ENCODE measurements at regions of chr17 and their contacts with region 1.

Region 1: DNA sequence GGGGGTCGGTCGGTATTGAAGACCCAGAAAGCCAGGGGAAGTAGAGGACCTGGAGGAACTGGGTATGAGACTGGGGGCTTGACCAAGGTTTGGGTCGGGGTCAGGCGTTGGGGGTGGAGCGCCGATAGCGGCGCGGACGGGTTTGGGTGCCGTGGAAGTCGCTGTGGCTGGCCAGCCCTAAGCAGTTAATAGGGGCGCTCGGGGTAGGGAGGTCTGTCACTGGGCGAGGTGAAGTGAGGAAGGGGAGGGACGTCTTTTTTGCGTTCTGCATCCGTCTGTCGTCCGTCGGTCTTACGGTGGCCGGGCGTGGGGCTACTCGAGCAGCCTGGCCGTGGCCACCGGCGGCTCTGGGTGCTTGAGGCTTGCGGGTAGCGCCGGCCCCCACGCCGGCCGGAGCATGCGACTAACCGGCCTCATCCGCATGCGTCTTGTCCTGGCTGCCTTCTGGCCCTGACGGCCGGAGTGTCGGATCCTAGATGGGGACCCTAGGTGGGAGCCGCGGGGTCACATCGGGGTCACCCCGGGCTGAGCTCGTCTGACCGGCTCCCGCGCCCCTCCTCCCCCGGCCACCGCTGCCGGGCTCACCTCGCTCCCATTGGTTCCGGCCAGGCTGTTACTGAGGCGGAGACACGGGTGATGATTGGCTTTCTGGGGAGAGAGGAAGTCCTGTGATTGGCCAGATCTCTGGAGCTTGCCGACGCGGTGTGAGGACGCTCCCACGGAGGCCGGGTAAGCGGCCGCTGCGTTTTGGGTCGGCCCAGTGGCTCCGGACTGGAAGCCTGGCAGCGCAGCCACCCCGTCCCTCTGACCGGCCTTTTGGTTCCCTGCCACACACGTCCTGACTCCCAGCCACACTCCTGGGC is 10.3 kb upstream of the TMEM88 start:
- DNase-seq: peak; percentile 89 to 92
- ATAC-seq: peak; percentile 33 to 60 (median 41)
- H3K4me3 ChIP-seq: peak overlapping the region; percentile 96
- H3K4me3 Mint-ChIP-seq: peak overlapping the region; percentile 100
- H3K27ac ChIP-seq: peak overlapping the region; percentile 100
- H3K27ac Mint-ChIP-seq: peak overlapping the region; percentile 100
- H3K4me1 ChIP-seq: peaks cover 46% of the 10 kb centered on the region
- H3K4me1 Mint-ChIP-seq: peaks cover 39 to 70% of the 10 kb centered on the region in 2 donors
- H3K27me3 ChIP-seq: no peaks in the 10 kb centered on the region
- H3K27me3 Mint-ChIP-seq: peaks cover 0 to 2% of the 10 kb centered on the region in 2 donors
- CTCF ChIP-seq: no peak

Region 2: GRCh38 chr17:7484067-7484918 is 360.2 kb before region 1 on chr17 and contains the start of gene POLR2A:
- intact Hi-C with region 1: loop called (anchors 5 kb)
- DNase-seq: peak; percentile 99
- ATAC-seq: peak; percentile 63 to 83 (median 66)
- H3K4me3 ChIP-seq: peak within 1 kb of the TSS; percentile 81
- H3K4me3 Mint-ChIP-seq: peak within 1 kb of the TSS; percentile 100
- H3K27ac ChIP-seq: peak within 1 kb of the TSS; percentile 96
- H3K27ac Mint-ChIP-seq: peak within 1 kb of the TSS; percentile 100
- H3K4me1 ChIP-seq: peaks cover 50% of the 10 kb centered on the region
- H3K4me1 Mint-ChIP-seq: peaks cover 72 to 84% of the 10 kb centered on the region in 2 donors
- H3K27me3 ChIP-seq: no peaks in the 10 kb centered on the region
- H3K27me3 Mint-ChIP-seq: no peaks in the 10 kb centered on the region
- CTCF ChIP-seq: no peak
- total RNA-seq, gene POLR2A: 515 to 879 (median 524) TPM

Region 3: GRCh38 chr17:7856883-7857723 is 12.6 kb after region 1 on chr17 and contains the start of gene NAA38:
- intact Hi-C with region 1: loop called (anchors 1 kb)
- DNase-seq: peak; percentile 89 to 99
- ATAC-seq: peak; percentile 75 to 92 (median 82)
- H3K4me3 ChIP-seq: peak within 1 kb of the TSS; percentile 86
- H3K4me3 Mint-ChIP-seq: no peak within 1 kb of the TSS
- H3K27ac ChIP-seq: peak within 1 kb of the TSS; percentile 92
- H3K27ac Mint-ChIP-seq: no peak within 1 kb of the TSS
- H3K4me1 ChIP-seq: peaks cover 33% of the 10 kb centered on the region
- H3K4me1 Mint-ChIP-seq: peaks cover 5 to 9% of the 10 kb centered on the region in 2 donors
- H3K27me3 ChIP-seq: no peaks in the 10 kb centered on the region
- H3K27me3 Mint-ChIP-seq: no peaks in the 10 kb centered on the region
- CTCF ChIP-seq: no peak
- total RNA-seq, gene NAA38: 35.9 to 40.3 (median 37.3) TPM

Region 4: GRCh38 chr17:7893187-7893880 is 48.8 kb after region 1 on chr17:
- intact Hi-C with region 1: no loop called
- DNase-seq: no peak
- ATAC-seq: no peak
- H3K4me3 ChIP-seq: no peak overlapping the region
- H3K4me3 Mint-ChIP-seq: no peak overlapping the region
- H3K27ac ChIP-seq: no peak overlapping the region
- H3K27ac Mint-ChIP-seq: no peak overlapping the region
- H3K4me1 ChIP-seq: peaks cover 12% of the 10 kb centered on the region
- H3K4me1 Mint-ChIP-seq: peaks cover 0 to 19% of the 10 kb centered on the region in 2 donors
- H3K27me3 ChIP-seq: no peaks in the 10 kb centered on the region
- H3K27me3 Mint-ChIP-seq: no peaks in the 10 kb centered on the region
- CTCF ChIP-seq: no peak

Region 5: DNA sequence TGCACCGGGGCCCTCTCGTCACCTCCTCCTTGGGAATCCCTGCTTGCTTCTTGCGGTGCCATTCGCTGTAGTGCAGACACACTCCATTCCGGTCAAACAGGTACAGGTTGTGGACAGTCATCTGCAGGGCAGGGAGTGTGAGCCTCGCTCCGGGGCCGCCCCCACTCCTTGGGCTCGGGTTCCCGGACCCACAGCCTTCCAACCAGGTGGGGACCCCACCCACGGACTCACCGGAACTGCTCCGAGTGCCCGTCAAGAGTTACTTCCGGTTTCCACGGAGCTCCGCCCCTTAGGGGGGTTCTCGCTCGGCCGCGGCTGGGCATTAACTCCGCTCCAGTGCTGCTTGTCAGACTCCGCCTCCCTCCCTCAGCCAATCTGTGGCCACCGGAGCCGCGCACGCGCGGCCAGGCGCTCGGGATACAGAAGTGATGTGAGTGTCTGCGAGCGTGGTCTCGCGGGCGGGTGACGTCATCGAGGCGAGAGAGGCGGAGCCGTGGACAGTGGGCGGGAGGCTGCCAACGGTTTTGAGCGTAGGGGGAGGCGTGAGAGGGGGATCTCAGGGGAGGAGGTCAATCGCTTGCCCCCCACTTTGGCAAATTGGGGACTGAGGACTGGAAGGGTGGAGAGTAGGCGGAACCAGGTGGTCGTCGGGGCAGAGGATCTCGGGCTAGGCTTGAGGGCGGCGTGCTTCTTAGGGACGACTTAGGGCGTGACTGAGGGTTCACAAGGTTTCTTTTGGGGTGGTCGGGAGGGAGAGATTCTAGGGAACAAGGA is 87.4 kb after region 1 on chr17 and contains the starts of genes CNTROB and TRAPPC1:
- intact Hi-C with region 1: loop called (anchors 5 kb)
- DNase-seq: peak; percentile 99 to 100
- ATAC-seq: peak; percentile 93 to 99 (median 96)
- H3K4me3 ChIP-seq: peak within 1 kb of the TSS; percentile 74
- H3K4me3 Mint-ChIP-seq: peak within 1 kb of the TSS; percentile 99
- H3K27ac ChIP-seq: peak within 1 kb of the TSS; percentile 79
- H3K27ac Mint-ChIP-seq: peak within 1 kb of the TSS; percentile 96 to 98
- H3K4me1 ChIP-seq: peaks cover 31% of the 10 kb centered on the region
- H3K4me1 Mint-ChIP-seq: peaks cover 36 to 56% of the 10 kb centered on the region in 2 donors
- H3K27me3 ChIP-seq: no peaks in the 10 kb centered on the region
- H3K27me3 Mint-ChIP-seq: no peaks in the 10 kb centered on the region
- CTCF ChIP-seq: no peak
- total RNA-seq, gene CNTROB: 36.3 to 49.8 (median 45.2) TPM
- total RNA-seq, gene TRAPPC1: 122 to 144 (median 135) TPM

Region 6: GRCh38 chr17:9432134-9432885 is 1587.8 kb after region 1 on chr17:
- intact Hi-C with region 1: no loop called
- DNase-seq: no peak
- ATAC-seq: peak in 1 of 3 donors; percentile 39
- H3K4me3 ChIP-seq: no peak overlapping the region
- H3K4me3 Mint-ChIP-seq: peak overlapping the region; percentile 64
- H3K27ac ChIP-seq: no peak overlapping the region
- H3K27ac Mint-ChIP-seq: peak overlapping the region; percentile 67 to 80
- H3K4me1 ChIP-seq: peaks cover 2% of the 10 kb centered on the region
- H3K4me1 Mint-ChIP-seq: peaks cover 34 to 37% of the 10 kb centered on the region in 2 donors
- H3K27me3 ChIP-seq: no peaks in the 10 kb centered on the region
- H3K27me3 Mint-ChIP-seq: no peaks in the 10 kb centered on the region
- CTCF ChIP-seq: no peak